OCI-LY7 (cell line): ENCODE measurements at regions of chr4 and their contacts with region 1.

Region 1: DNA sequence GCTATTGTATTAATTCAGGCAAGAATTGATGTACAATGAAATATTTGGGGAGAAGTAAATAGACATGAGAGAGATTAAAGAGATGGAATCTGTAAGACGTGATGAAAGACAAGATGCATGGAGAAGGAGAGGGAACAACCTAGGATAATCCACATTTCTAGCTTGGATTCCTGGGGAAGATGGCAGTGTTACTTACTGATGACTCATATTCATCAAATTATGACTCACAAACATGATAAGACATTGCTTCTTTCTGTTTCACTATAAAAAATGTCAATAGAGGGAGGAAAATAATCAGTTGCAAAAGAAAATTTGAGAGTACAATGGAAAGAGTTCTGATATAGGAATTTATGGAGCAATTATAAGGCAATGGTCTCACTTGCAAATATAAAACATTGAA is 104.1 kb upstream of the BMP3 start:
- DNase-seq: no peak
- H3K4me3 ChIP-seq: no peak overlapping the region
- H3K27ac ChIP-seq: peak overlapping the region; percentile 84
- H3K4me1 ChIP-seq: peaks cover 36% of the 10 kb centered on the region
- CTCF ChIP-seq: no peak

Region 2: GRCh38 chr4:80876810-80877209 is 49.6 kb before region 1 on chr4:
- CTCF ChIA-PET with region 1: no interaction called
- POLR2A ChIA-PET with region 1: interaction called, 25 read pairs
- intact Hi-C with region 1: loop called (anchors 1 kb)
- DNase-seq: peak; percentile 67
- H3K4me3 ChIP-seq: peak overlapping the region; percentile 4
- H3K27ac ChIP-seq: peak overlapping the region; percentile 98
- H3K4me1 ChIP-seq: peaks cover 58% of the 10 kb centered on the region
- CTCF ChIP-seq: no peak

Region 3: DNA sequence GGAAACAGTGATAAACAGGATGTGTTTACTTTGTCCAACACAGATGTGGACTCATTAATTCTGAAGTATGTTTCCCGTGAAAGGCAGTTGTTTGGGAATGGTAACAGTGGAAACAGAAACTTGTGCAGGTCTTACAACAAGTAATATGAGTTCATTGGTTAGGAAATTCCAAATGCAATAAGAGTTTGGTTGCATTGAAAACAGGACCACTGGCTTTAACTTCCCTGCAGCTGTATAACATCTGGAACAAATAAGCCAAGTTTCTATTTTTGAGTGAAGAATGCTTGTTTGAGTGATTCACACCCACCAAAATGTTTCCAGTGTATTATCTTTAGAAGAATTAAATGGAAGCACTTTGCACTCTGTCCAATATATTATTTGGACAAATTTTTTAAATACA is 21.7 kb after region 1 on chr4:
- CTCF ChIA-PET with region 1: no interaction called
- POLR2A ChIA-PET with region 1: interaction called, 20 read pairs
- intact Hi-C with region 1: no loop called
- DNase-seq: no peak
- H3K4me3 ChIP-seq: no peak overlapping the region
- H3K27ac ChIP-seq: no peak overlapping the region
- H3K4me1 ChIP-seq: peaks cover 18% of the 10 kb centered on the region
- CTCF ChIP-seq: no peak

Region 4: GRCh38 chr4:81030061-81030980 is 103.9 kb after region 1 on chr4 and contains the start of gene BMP3:
- CTCF ChIA-PET with region 1: no interaction called
- POLR2A ChIA-PET with region 1: interaction called, 41 read pairs
- intact Hi-C with region 1: loop called (anchors 1 kb)
- DNase-seq: peak; percentile 82
- H3K4me3 ChIP-seq: peak within 1 kb of the TSS; percentile 79
- H3K27ac ChIP-seq: peak within 1 kb of the TSS; percentile 92
- H3K4me1 ChIP-seq: peaks cover 55% of the 10 kb centered on the region
- CTCF ChIP-seq: no peak
- total RNA-seq, gene BMP3: 40.6 and 45.8 TPM in 2 replicates